Activated CD8-positive, alpha-beta memory T cell treated with anti-CD3 and anti-CD28 coated beads, Interleukin-2, amount 10 ng/mL, durations not matched to agents 7 days and 5 days (primary cell): ENCODE measurements at regions of chr22 and their contacts with region 1.

Region 1: DNA sequence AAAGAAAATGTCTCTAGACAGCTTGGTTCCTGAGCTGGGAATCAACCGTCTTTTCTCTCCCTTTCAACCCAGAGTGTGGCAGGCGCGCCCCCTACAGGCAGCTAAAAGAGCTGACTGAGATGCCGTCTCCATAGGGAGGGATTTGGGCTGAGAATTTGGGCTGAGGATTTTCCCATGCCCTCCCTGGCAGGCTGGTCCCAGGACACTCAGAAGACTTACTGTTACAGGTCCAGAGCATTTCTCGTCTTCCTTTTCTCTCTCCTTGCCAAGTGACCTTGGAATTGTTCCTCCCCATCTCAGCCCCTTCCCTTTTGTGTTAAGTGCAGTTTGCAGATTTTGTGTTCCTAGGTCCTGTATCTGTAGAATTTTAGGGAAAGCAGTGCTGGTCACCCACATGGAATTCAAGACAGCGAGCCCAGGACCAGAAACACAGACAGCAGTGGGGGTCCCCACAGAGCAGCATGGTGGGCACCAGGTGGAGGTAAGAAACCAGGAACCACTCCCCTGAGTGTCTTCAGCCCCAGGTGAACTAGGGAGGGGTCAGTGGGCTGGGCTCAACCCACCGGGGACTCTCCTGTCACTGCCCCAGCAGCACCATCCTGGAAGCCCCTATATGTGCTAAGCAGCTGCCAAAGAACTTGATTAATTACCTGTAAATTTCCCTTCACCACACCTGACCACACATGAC is 9.9 kb upstream of the IGLL5 start:
- DNase-seq: peak; percentile 81
- ATAC-seq: peak; percentile 51
- H3K4me3 Mint-ChIP-seq: no peak overlapping the region
- H3K27ac Mint-ChIP-seq: no peak overlapping the region
- H3K4me1 Mint-ChIP-seq: no peaks in the 10 kb centered on the region
- H3K27me3 Mint-ChIP-seq: peaks cover 17% of the 10 kb centered on the region

Region 2: DNA sequence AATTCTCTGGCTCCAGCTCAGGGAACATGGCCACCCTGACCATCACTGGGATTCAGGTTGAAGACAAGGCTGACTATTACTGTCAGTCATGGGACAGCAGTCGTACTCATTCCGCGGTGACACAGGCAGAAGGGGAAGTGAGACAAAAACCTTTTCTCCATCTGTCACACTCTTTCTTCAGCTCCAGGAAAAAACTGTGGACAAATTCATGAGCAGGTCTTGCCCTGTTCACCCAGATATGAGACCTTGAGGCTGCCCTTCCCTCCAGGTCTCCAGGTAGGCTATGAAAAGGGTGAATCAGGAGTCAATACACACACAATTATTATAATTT is 272.6 kb before region 1 on chr22:
- CTCF ChIA-PET with region 1: no interaction called
- DNase-seq: no peak
- ATAC-seq: no peak
- H3K4me3 Mint-ChIP-seq: no peak overlapping the region
- H3K27ac Mint-ChIP-seq: no peak overlapping the region
- H3K4me1 Mint-ChIP-seq: no peaks in the 10 kb centered on the region
- H3K27me3 Mint-ChIP-seq: peaks cover 9% of the 10 kb centered on the region

Region 3: GRCh38 chr22:22802339-22802970 is 75.2 kb before region 1 on chr22:
- CTCF ChIA-PET with region 1: interaction called, 355 read pairs
- DNase-seq: peak; percentile 60
- ATAC-seq: peak; percentile 36
- H3K4me3 Mint-ChIP-seq: no peak overlapping the region
- H3K27ac Mint-ChIP-seq: no peak overlapping the region
- H3K4me1 Mint-ChIP-seq: peaks cover 4% of the 10 kb centered on the region
- H3K27me3 Mint-ChIP-seq: peaks cover 11% of the 10 kb centered on the region

Region 4: GRCh38 chr22:22855617-22856308 is 21.9 kb before region 1 on chr22:
- CTCF ChIA-PET with region 1: interaction called, 223 read pairs
- DNase-seq: peak; percentile 64
- ATAC-seq: peak; percentile 86
- H3K4me3 Mint-ChIP-seq: no peak overlapping the region
- H3K27ac Mint-ChIP-seq: no peak overlapping the region
- H3K4me1 Mint-ChIP-seq: no peaks in the 10 kb centered on the region
- H3K27me3 Mint-ChIP-seq: peaks cover 33% of the 10 kb centered on the region

Region 5: DNA sequence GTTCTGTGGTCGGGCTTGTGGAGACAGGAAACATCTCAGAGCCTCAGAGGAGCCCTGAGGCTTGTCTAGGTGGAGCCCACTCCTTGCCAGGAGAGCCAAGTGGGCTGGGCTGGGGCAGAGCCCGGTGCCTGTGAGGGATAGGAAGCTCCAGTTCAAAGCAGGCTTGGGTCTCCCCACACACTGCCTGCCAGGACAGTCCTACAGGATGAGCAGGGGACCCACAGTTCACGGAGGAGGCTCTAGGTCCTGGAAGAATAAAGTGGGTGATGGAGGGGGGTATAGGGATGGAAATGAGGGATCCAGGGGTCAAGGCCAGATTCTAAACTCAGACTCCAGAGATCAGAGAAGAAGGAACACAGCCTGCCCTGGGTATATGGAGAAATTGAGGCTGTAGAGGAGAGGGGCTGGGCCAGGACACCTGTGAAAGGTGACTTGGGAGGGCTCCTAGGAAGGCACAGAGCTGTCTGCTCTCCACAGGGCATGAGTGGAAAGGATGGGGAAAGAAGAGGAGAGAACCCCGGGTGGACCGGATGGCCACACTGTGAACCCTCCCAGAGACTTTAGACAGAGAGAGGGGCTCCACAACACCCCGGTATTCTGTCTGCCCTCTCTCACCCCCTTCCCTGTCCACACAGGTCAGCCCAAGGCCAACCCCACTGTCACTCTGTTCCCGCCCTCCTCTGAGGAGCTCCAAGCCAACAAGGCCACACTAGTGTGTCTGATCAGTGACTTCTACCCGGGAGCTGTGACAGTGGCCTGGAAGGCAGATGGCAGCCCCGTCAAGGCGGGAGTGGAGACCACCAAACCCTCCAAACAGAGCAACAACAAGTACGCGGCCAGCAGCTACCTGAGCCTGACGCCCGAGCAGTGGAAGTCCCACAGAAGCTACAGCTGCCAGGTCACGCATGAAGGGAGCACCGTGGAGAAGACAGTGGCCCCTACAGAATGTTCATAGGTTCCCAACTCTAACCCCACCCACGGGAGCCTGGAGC is 17.4 kb after region 1 on chr22:
- CTCF ChIA-PET with region 1: no interaction called
- DNase-seq: no peak
- ATAC-seq: no peak
- H3K4me3 Mint-ChIP-seq: no peak overlapping the region
- H3K27ac Mint-ChIP-seq: no peak overlapping the region
- H3K4me1 Mint-ChIP-seq: no peaks in the 10 kb centered on the region
- H3K27me3 Mint-ChIP-seq: peaks cover 58% of the 10 kb centered on the region

Region 6: DNA sequence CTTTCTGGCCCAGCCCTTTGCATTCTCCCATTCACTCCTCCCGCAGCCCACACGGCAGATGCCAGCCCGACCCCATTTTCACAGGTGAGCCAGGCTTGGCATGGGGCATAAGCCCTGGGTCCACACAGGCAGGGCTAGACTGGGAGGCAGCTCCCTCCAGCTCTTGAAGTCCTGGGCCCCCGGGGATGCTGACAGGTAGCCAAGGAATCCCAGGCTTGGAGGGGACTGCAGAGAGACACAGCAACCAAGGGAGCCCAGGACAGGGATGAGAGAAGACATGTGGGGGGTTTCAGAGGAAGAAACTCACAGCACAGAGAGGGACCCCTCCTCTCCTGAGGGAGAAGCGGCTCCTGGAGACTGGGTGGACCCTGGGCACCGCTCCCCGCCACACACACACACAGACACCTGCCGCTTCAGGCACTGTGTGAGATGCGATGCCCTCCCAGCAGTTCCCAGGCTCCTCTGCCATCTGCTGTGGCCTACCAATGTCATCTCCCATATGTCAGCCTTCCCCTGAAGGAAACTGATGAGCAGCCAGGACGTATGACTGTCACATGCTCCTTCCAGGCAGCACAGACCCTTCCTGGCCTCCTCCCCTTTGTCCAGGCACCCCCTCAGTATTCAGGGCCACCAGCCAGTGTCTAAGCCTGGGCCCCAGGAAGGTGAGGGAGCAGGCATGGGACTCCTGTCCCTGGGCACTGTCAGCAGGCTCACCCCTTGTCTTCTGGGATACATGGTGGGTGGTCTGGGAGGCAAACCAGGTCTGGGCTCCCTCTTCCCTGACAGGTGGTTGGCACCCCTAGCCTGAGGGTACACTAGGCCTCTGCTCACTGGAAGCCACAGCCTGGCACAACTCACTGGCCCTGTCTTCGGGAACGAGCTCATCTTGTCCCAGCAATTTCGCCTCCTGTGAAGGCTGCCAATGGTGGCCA is 290.7 kb after region 1 on chr22:
- CTCF ChIA-PET with region 1: no interaction called
- DNase-seq: no peak
- ATAC-seq: no peak
- H3K4me3 Mint-ChIP-seq: no peak overlapping the region
- H3K27ac Mint-ChIP-seq: no peak overlapping the region
- H3K4me1 Mint-ChIP-seq: no peaks in the 10 kb centered on the region
- H3K27me3 Mint-ChIP-seq: no peaks in the 10 kb centered on the region